Activated T-helper 2 cell treated with anti-CD3 and anti-CD28 coated beads, Interferon-gamma antibody, Interleukin-2, Interleukin-4, amounts not matched to agents 10 μg/mL and 5 μg/mL and 100 μg/mL, durations not matched to agents 14 hours and 24 hours and 36 hours (primary cell): ENCODE measurements at regions of chr12 and their contacts with region 1.

Region 1: DNA sequence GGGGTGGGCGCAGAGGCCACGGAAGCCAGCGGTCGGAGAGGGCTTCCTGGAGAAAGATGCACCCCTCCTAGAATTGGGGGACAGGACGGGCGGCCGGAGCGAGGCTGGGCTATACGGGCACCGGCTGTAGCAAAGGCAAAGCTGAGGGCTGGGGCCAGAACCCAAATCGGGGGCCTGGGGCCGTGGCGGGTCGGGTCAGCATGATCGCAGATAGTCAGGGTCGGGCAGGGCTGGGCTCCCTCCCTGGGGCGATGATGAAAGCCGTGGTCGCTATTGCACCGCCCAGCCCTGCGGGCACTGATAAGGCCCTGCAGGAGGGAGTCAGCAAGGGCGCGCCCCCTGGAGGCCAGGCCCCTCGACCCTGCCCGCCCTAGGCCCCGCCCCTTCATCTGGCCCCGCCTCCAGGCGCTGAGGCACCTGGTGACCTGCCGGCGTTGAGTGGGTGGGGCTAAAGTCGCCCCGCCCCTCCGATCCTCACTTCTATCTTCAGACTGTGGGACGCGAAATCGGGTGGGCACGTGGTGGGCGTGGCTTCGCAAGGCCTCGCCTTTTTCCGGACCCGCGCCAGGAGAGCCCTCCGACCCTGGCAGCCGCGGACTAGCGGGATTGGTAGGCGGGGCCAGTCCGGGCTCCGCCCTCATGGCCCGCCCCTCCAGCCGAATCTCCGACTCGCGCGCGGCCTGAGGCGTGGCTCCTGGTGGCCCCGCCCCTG is 418 bp upstream of the SH2B3 start:
- DNase-seq: peak; percentile 96
- H3K4me3 Mint-ChIP-seq: peak overlapping the region; percentile 84
- H3K27ac Mint-ChIP-seq: peak overlapping the region; percentile 95
- H3K4me1 Mint-ChIP-seq: peaks cover 49% of the 10 kb centered on the region
- H3K27me3 Mint-ChIP-seq: peaks cover 1% of the 10 kb centered on the region

Region 2: DNA sequence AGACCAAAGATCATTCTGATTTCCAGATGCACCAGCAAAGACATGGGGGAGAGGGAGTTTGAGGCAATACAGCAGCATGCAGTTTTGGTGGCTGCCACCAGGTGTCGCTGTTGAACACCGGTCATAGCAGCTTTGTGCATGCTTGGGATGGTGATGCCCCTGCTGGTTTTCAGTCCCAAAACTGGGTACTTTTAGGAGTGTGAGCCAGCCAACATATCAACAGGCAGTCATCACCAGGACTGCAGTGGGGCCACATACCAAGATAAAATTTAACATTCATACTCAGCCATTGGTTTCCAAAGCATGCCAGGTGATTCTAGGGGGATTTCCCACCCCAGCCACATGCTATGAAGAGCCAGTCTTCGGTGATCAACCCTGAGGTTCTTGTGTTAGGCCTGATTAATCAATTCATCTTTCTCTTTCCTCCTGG is 100.6 kb before region 1 on chr12:
- intact Hi-C with region 1: no loop called
- DNase-seq: peak; percentile 18
- H3K4me3 Mint-ChIP-seq: no peak overlapping the region
- H3K27ac Mint-ChIP-seq: no peak overlapping the region
- H3K4me1 Mint-ChIP-seq: no peaks in the 10 kb centered on the region
- H3K27me3 Mint-ChIP-seq: no peaks in the 10 kb centered on the region

Region 3: GRCh38 chr12:111434680-111435338 is 29.5 kb after region 1 on chr12:
- intact Hi-C with region 1: loop called (anchors 1 kb)
- DNase-seq: peak; percentile 80
- H3K4me3 Mint-ChIP-seq: peak overlapping the region; percentile 63
- H3K27ac Mint-ChIP-seq: peak overlapping the region; percentile 96
- H3K4me1 Mint-ChIP-seq: peaks cover 77% of the 10 kb centered on the region
- H3K27me3 Mint-ChIP-seq: no peaks in the 10 kb centered on the region

Region 4: GRCh38 chr12:111444925-111445725 is 39.8 kb after region 1 on chr12:
- intact Hi-C with region 1: loop called (anchors 1 kb)
- DNase-seq: peak; percentile 86
- H3K4me3 Mint-ChIP-seq: peak overlapping the region; percentile 22
- H3K27ac Mint-ChIP-seq: peak overlapping the region; percentile 79
- H3K4me1 Mint-ChIP-seq: peaks cover 79% of the 10 kb centered on the region
- H3K27me3 Mint-ChIP-seq: no peaks in the 10 kb centered on the region

Region 5: DNA sequence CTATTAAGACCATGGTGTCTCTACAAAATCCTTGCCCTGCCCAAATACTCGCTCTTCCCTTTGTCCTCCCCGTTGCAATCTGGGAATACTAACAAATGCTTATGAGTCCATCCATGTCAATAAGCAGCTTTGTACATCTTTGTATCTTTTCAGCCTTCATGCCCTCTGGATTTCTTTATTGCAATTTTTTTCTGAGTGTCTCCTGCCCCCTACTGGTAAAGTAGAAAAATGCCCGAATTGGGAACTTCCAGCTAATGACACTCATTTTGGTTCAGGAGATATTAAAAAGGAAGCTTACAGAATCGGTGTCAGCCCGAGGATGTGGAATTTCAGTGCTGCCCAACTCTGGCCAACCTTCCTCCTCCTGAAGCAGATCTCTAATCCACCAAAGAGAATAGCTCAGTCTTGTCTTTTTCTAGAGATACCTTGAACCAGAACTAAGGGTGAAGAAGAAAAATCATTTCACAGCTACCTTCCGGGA is 46.4 kb after region 1 on chr12:
- intact Hi-C with region 1: loop called (anchors 1 kb)
- DNase-seq: no peak
- H3K4me3 Mint-ChIP-seq: no peak overlapping the region
- H3K27ac Mint-ChIP-seq: no peak overlapping the region
- H3K4me1 Mint-ChIP-seq: peaks cover 40% of the 10 kb centered on the region
- H3K27me3 Mint-ChIP-seq: no peaks in the 10 kb centered on the region

Region 6: DNA sequence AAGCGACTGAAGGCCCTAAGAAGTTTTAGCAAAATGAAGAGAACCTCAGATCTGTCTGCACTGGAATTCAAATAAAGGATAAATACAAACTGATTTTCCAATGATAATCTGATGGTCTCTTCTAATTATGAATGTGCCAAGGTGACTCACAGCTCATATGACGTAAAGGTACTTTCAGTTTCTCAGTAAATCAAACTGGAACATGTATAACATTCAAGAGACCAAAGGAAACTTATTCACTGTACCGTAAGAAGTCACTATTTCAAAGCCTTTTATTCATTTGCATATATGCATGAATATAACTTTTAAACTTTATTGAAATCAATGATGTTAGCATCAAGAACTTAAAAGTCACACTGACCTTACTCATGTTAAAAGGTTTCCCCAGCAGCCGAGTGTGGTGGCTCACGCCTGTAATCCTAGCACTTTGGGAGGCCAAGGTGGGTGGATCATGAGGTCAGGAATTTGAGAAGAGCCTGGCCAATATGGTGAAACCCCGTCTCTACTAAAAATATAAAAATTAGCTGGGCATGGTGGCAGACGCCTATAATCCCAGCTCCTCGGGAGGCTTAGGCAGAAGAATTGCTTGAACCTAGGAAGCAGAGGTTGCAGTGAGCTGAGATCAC is 141.6 kb after region 1 on chr12:
- intact Hi-C with region 1: loop called (anchors 5 kb)
- DNase-seq: no peak
- H3K4me3 Mint-ChIP-seq: peak overlapping the region; percentile 37
- H3K27ac Mint-ChIP-seq: peak overlapping the region; percentile 88
- H3K4me1 Mint-ChIP-seq: peaks cover 20% of the 10 kb centered on the region
- H3K27me3 Mint-ChIP-seq: no peaks in the 10 kb centered on the region

Region 7: GRCh38 chr12:111599459-111600204 is 194.3 kb after region 1 on chr12:
- intact Hi-C with region 1: loop called (anchors 5 kb)
- DNase-seq: peak; percentile 83
- H3K4me3 Mint-ChIP-seq: peak overlapping the region; percentile 89
- H3K27ac Mint-ChIP-seq: peak overlapping the region; percentile 89
- H3K4me1 Mint-ChIP-seq: peaks cover 19% of the 10 kb centered on the region
- H3K27me3 Mint-ChIP-seq: peaks cover under 1% of the 10 kb centered on the region